Ascending aorta (tissue), 2 donors: ENCODE measurements at regions of chr13 and their contacts with region 1.

Region 1: DNA sequence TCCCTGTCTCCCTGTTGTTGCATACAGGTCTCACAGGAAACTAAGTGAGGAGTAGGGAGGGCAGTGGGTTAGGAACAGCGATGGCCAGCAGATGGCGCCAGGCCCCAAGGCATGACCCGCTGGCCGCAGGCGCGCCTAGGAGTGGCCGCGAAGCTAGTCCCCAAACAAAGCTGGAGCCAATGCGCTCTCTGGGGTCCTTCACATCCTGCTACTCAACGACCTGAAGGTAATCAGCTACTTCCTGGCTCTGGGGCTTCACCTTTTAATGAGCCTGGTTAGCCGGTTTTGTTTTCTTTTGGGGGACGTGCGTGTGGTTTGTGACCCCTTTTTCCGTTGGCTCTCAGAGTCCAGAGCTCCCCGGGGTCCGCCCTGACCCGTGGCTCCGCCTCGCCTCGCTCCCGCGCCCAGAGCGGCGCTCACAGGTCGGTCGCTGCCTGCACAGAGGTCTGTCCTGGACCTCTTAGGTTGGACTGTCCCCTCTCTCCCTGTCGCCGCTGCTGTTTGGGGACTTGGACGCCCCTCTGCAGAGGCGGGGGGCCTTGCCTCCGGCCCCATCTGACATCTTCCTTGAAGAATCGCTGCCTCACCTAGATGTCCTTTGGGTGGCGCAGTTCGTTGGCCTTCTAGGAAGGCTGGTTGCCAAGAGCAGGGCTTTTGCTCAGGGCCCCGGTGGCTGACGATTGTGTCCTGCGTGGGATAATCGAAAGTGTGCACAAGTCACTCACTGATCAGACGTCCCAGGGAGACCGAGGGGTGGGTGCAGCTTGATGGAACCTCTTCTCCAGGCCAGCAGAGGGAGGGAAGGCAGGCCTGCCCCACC is 62.1 kb upstream of the GTF3A start:
- DNase-seq: peak; percentile 24 to 89
- H3K4me3 ChIP-seq: peak overlapping the region; percentile 58 to 60
- H3K27ac ChIP-seq: no peak overlapping the region
- H3K4me1 ChIP-seq: peaks cover 0 to 6% of the 10 kb centered on the region in 2 donors
- H3K27me3 ChIP-seq: no peaks in the 10 kb centered on the region
- CTCF ChIP-seq: peak; percentile 79 to 94 (median 88)

Region 2: GRCh38 chr13:26946684-26947343 is 415.5 kb before region 1 on chr13:
- intact Hi-C with region 1: loop called (anchors 2 kb)
- DNase-seq: no peak
- H3K4me3 ChIP-seq: no peak overlapping the region
- H3K27ac ChIP-seq: no peak overlapping the region
- H3K4me1 ChIP-seq: no peaks in the 10 kb centered on the region
- H3K27me3 ChIP-seq: no peaks in the 10 kb centered on the region
- CTCF ChIP-seq: peak; percentile 62 to 70 (median 66)

Region 3: DNA sequence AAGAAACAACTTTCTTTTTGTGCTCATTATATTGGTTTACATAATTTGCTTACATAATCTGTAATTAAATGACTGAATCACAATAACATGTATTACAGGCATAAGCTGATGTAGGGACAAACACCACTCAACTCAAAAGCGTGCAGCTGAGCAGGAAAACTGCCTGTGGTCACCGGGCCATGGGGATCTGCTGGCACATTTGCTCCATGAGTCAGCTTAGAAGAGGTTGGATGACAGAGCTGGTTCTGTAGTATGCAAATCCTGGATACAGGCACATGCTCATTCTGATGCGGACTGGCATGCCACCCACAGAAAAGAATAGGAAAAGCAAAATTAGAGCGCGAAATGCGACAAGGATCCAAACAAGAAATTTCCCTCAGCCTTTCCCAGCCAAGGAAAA is 319.3 kb before region 1 on chr13:
- intact Hi-C with region 1: no loop called
- DNase-seq: peak in 1 of 2 donors; percentile 72
- H3K4me3 ChIP-seq: no peak overlapping the region
- H3K27ac ChIP-seq: no peak overlapping the region
- H3K4me1 ChIP-seq: no peaks in the 10 kb centered on the region
- H3K27me3 ChIP-seq: no peaks in the 10 kb centered on the region
- CTCF ChIP-seq: no peak

Region 4: DNA sequence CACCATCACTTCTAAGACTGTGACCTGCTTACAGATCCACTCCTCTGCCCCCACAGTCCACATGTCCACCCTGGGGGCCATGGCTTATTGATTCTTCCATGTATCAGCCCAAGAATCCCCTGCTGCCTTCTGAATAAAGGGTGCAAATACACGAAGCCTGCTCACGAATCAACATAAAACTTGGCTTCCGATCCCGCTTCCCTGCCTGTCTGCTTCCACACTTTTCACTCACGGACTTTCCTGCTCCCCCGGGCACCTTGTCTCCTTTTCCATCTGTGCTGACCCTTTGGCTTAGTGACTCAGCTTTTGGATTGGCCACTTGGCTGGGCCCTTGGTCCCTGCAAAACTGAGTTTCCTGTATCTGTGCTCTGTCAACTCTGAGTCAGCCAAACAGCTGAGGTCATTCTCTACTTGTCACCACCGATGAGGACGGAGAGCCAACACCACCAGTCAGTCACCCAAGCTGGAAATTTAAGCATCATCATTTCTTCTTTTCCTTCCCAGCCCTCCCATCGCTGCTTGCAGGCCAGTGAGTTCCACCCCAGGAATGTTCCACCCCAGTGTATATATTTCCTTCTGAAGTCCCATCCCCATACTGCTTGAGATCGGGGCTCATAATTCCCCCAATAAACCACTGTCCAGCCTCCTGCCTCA is 179.3 kb before region 1 on chr13:
- intact Hi-C with region 1: loop called (anchors 5 kb)
- DNase-seq: peak; percentile 46 to 91
- H3K4me3 ChIP-seq: peak overlapping the region in 1 of 2 donors; percentile 21
- H3K27ac ChIP-seq: peak overlapping the region in 1 of 2 donors; percentile 45
- H3K4me1 ChIP-seq: peaks cover 3% of the 10 kb centered on the region in 2 donors
- H3K27me3 ChIP-seq: no peaks in the 10 kb centered on the region
- CTCF ChIP-seq: no peak

Region 5: DNA sequence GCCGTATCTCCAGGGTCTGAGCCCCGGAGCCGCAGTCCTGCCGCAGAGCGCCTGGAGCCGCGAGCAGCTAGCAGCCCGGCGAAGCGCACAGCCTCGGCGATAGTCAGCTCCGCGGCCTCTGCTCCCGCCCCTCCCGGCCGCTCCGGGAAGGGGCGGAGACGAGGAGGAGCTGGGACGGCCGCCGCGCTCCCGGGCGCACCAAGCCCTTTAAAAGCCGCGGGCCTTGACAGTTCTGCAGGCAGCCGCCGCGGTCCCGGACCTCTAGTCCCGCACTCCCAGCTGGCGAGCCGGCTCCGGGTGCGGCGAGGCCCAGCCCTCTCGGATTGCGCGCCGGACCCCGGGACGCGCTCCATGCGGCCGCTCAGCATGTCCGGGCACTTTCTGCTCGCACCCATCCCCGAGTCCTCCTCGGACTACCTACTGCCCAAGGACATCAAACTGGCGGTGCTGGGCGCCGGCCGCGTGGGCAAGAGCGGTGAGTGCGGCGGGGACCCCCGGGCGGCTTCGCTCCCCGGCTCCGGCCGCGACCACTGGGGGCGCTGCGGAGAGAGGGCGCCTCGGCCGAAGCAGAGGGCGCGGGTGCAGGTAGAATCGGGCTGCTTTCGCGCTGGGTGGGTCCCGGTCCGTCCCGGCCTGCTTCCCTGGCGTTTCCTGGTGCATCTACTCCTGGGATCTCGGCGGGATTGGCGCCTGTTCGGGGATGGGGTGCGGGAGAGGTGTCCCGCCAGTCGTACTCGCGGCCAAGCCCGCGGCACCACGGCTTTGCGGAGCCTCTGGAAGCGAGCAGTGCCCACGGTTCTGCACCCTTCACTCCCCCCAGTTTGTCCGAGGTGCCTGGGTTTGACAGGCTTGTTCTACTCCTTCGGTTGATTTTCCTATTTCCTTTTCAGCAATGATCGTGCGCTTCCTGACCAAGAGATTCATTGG is 91.4 kb before region 1 on chr13 and contains the start of gene RASL11A:
- intact Hi-C with region 1: loop called (anchors 5 kb)
- DNase-seq: peak; percentile 44 to 95
- H3K4me3 ChIP-seq: peak within 1 kb of the TSS; percentile 67 to 84
- H3K27ac ChIP-seq: peak within 1 kb of the TSS; percentile 91 to 93
- H3K4me1 ChIP-seq: peaks cover 4 to 30% of the 10 kb centered on the region in 2 donors
- H3K27me3 ChIP-seq: no peaks in the 10 kb centered on the region
- CTCF ChIP-seq: peak; percentile 91 to 98 (median 94)
- total RNA-seq, gene RASL11A: 50.4 TPM

Region 6: DNA sequence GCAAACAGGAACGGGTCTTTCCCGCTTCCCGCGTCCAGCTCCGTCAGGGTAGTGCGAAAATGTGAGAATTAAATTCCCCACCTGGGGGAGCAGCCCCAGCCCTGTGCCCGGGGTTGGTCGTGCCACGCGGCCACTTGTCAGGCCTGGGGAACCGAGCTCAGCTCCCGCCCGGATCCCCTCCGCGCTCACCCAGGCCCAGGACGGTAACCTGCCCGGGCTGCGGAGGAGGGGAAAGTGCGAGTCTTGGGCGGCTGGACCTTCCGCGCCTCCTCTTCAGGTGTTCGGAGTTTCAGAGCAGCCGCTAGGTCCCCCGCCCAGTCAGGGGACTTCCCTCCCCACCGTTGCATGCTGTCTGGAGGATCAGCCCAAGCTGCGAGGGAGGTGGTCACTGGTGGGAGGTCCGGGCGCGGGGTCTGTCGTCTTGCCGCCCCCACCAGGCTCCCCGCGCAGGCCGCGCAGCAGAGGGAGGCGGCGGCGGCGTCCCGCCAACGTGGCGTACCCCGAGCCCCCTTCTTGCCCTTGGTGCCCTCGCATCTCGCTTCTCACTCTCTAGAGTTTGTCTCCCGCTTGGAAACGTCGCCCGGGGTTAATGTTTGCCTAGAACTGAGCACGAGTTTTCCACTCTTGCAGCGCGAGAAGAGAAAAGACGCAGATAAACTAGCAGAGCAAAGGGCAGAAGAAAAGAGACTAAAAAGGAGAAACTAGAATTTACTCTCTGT is 618.2 kb after region 1 on chr13:
- intact Hi-C with region 1: loop called (anchors 1 kb)
- DNase-seq: no peak
- H3K4me3 ChIP-seq: peak overlapping the region in 1 of 2 donors; percentile 17
- H3K27ac ChIP-seq: no peak overlapping the region
- H3K4me1 ChIP-seq: peaks cover 2 to 10% of the 10 kb centered on the region in 2 donors
- H3K27me3 ChIP-seq: peaks cover 13% of the 10 kb centered on the region
- CTCF ChIP-seq: no peak